GM13976 (cell line): ENCODE measurements at regions of chr5 and their contacts with region 1.

Region 1: GRCh38 chr5:112757468-112758208 is 20.0 kb downstream of the APC start:
- DNase-seq: peak; percentile 46
- CTCF ChIP-seq: peak; percentile 57

Region 2: GRCh38 chr5:112475747-112476365 is 281.8 kb before region 1 on chr5:
- in situ Hi-C with region 1: no loop called
- DNase-seq: no peak
- CTCF ChIP-seq: no peak

Region 3: GRCh38 chr5:112551419-112552032 is 206.1 kb before region 1 on chr5:
- in situ Hi-C with region 1: loop called (anchors 25 kb)
- DNase-seq: peak; percentile 50
- CTCF ChIP-seq: peak; percentile 48

Region 4: GRCh38 chr5:112878760-112879159 is 121.1 kb after region 1 on chr5:
- in situ Hi-C with region 1: no loop called
- DNase-seq: no peak
- CTCF ChIP-seq: no peak